Heart right ventricle (tissue), 16 donors: ENCODE measurements at regions of chr21 and their contacts with region 1.

Region 1: DNA sequence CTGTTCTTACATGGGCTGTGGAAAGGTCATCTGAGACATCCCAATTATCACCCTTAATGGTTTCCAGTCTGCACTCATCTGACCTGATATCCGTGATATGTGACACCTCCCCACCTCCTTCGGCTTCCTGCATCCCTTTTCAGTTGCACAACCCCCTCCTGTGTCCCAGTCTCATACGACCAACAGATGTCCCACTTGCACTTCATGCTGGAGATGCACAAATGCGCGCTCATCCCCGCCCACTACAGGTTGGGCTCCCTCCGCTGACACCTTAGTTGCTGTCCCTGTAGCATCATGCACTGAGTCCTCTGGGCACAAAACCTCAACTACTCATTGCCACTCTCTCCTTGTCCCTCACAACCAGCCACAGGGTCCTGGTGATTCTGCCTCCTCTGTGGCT is 94.4 kb downstream of the MIS18A start:
- DNase-seq: no peak
- ATAC-seq: no peak
- H3K4me3 ChIP-seq: no peak overlapping the region
- H3K27ac ChIP-seq: no peak overlapping the region
- H3K4me1 ChIP-seq: peaks cover 0 to 13% (median 0%) of the 10 kb centered on the region in 9 donors
- H3K27me3 ChIP-seq: no peaks in the 10 kb centered on the region
- CTCF ChIP-seq: no peak

Region 2: DNA sequence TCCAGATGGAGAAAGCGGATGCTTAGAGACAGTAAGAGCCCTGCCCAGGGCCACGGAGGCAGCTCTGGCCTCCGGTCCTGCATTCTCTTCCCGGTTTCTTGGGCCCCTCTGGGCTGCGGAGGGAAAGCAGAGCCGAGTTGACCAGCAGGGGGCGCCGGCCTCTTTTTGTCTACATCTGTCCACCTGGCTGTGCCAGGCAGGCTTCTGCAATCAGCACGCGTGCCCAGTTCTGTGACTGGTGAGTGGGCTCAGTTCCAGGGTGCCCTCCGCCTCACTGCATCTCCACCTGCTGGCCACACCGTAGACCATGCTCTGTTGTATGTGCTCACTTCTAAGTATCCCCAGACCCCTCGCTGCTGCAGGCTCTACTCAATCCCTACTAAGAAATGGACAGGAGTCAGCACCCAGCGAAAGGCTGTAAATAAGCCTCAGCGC is 318.4 kb before region 1 on chr21:
- intact Hi-C with region 1: loop called in 1 of 10 experiments (anchors 10 kb)
- DNase-seq: peak; percentile 83 to 88
- ATAC-seq: peak; percentile 93 to 97 (median 96)
- H3K4me3 ChIP-seq: no peak overlapping the region
- H3K27ac ChIP-seq: no peak overlapping the region
- H3K4me1 ChIP-seq: peaks cover 0 to 9% (median 2%) of the 10 kb centered on the region in 9 donors
- H3K27me3 ChIP-seq: peaks cover 0 to 19% (median 9%) of the 10 kb centered on the region in 7 donors
- CTCF ChIP-seq: peak; percentile 72 to 95 (median 92)

Region 3: DNA sequence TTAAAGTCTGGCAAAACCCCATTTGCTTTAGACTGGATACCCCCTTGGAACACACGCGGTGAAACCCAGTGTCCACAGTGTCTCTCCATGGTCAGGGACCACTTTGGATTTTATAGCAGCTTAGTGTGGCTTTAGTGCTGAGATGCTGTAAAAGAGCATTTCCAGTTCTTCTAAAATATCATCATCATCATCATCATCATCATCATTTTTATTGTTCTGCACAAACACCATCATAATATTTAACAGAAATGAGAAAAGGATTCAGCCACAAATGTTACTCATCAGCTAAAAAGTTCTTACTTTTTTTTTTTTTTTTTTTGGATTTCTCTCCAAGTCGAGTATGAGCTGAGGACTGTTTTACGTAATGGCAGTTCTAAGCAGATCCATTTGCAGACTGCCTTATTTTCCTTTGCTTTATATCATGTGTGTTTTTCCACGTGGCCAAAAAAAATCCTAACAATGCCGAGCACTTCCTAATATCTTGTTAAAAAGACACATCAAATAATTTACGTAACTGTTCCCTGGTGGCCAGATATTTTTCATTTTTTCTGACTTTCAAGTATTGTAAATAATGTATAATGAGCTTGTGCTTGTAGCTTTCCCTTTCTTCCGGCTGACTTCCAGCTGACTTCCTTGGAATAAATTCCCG is 290.8 kb after region 1 on chr21:
- intact Hi-C with region 1: no loop called
- DNase-seq: no peak
- ATAC-seq: peak in 4 of 8 donors; percentile 23 to 39 (median 28)
- H3K4me3 ChIP-seq: no peak overlapping the region
- H3K27ac ChIP-seq: peak overlapping the region in 2 of 10 donors; percentile 2 to 9
- H3K4me1 ChIP-seq: peaks cover 5 to 22% (median 16%) of the 10 kb centered on the region in 9 donors
- H3K27me3 ChIP-seq: no peaks in the 10 kb centered on the region
- CTCF ChIP-seq: no peak